ENCODE measurements at regions of chr14 and their contacts with region 1.

Region 1: DNA sequence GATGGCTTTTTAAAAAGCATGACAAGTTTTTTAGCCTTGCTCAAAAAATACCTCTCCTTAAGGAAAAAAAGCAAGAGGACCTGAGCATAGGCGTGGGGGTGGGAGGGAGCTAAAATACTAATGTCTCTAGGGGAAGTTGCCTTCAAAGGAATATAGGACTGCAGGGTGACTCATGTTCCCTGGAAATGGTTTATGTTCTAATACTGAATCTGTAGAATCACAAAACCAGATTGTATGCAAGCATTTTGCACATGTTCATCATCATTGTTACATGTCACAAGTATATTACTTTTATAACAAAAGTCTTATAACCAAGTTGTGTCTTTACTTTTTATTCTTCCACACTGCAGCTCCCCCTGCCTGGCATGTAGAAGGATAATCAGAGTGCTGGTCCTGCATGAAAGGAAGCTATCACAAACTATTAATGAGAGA is 36.6 kb downstream of the GPR135 start:
- DNase-seq: no peak

Region 2: DNA sequence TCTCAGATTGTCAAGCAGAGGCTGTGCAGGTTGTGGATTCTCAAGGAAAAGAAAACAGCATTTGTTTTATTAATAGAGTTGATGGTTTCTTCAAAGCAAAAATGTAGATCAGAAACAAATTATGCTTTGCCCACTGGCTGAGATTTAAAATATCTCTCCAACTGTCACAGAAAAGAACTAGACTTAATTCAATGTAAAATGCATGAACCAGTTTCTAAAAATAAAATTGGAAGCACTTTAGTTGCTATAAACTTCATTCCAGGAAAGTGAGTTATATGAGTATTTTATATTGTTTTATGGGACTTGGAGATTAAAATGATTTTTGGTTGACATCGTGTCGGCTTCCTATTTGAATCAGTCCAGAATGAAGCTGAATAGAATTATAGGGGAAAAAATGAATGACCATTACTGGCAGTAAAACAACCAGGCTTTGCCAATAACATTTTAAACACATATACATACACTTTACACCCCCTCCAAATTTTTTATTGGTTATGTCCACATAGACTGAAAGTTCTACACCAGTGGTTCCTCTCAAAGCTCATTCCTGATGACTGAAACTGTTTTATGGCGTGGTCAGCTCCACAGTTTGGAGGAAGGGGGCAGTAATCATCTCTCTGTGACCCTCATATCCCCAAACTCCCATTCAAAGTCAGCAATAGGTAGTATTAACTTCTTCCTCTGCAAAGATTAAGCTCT is 295.7 kb before region 1 on chr14:
- intact Hi-C with region 1: loop called (anchors 10 kb)
- DNase-seq: no peak

Region 3: DNA sequence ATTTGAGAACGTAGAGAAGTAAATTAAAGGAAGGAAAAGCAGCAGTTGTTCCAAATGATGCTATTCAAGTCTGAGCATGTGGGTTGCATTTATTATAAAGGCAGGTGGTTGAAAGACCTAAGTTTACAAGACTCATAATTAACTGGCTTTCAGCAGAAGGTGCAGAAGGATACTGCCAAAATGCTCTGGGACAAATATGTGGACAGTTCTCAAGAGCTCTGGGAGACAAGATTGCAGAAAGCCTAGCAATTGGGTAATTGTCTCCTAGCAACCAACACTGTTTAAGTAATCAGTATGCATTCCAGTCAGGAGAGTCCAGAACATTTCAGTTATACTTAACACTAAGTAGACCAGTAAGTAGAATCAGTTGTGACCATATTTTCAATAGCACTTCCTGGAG is 94.9 kb before region 1 on chr14:
- intact Hi-C with region 1: loop called (anchors 5 kb)
- DNase-seq: no peak

Region 4: GRCh38 chr14:59679872-59680271 is 251.3 kb after region 1 on chr14:
- intact Hi-C with region 1: no loop called
- DNase-seq: no peak

Region 5: GRCh38 chr14:59829469-59830337 is 401.1 kb after region 1 on chr14:
- intact Hi-C with region 1: no loop called
- DNase-seq: no peak

Measured in cardiac septum (tissue), 1 donor.